ENCODE measurements at regions of chr3 and their contacts with region 1.

Region 1: DNA sequence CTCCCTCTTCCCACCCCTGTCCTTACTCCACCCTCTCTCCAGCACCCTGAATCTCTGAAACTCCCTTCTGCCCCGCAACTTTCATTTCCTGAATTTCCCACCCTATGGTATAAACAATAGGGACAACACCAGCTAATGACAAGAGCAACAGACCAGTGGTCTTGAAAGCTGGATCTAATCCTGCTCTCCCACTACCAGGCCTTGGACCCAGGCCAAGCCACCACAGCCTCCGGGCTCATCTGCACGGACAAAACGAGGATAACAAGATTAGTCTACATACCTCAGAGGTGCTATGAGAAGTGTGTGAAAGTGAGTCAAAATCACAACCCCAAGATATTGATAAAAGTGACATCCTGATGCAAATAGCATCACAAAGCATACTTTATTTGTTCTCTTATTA is 128.6 kb downstream of the ERC2 start:
- DNase-seq: no peak
- H3K4me3 ChIP-seq: no peak overlapping the region
- H3K27ac ChIP-seq: no peak overlapping the region
- H3K4me1 ChIP-seq: no peaks in the 10 kb centered on the region
- H3K27me3 ChIP-seq: no peaks in the 10 kb centered on the region
- CTCF ChIP-seq: no peak
- POLR2A ChIP-seq: no peak

Region 2: DNA sequence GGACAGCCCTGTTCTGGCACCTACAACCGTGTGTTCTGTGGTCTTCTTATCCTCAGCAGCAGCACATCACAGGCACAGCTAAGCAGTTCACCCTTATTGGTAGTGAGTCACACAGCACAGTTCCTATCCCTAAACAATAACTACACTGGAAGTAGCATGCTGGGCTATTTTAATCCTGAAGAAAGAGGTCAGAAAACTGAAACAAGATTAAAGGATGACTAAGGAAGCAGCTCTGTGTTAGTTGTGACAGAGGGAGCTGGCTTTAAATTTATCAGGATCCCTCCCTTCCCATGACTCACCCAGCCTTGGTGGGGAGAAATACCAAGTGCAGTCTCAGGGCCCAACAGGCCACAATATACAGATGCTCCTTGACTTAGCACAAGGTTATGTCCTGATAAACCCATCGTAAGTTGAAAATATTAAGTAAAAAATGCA is 15.7 kb before region 1 on chr3:
- CTCF ChIA-PET with region 1: interaction called, 13 read pairs
- POLR2A ChIA-PET with region 1: no interaction called
- dilution Hi-C with region 1: no loop called
- intact Hi-C with region 1: no loop called
- DNase-seq: peak; percentile 78
- H3K4me3 ChIP-seq: no peak overlapping the region
- H3K27ac ChIP-seq: peak overlapping the region; percentile 20
- H3K4me1 ChIP-seq: peaks cover 17% of the 10 kb centered on the region
- H3K27me3 ChIP-seq: no peaks in the 10 kb centered on the region
- CTCF ChIP-seq: no peak
- POLR2A ChIP-seq: no peak

Region 3: GRCh38 chr3:56443372-56443771 is 103.7 kb after region 1 on chr3:
- CTCF ChIA-PET with region 1: interaction called, 55 read pairs
- POLR2A ChIA-PET with region 1: no interaction called
- dilution Hi-C with region 1: no loop called
- intact Hi-C with region 1: loop called (anchors 1 kb)
- DNase-seq: no peak
- H3K4me3 ChIP-seq: no peak overlapping the region
- H3K27ac ChIP-seq: no peak overlapping the region
- H3K4me1 ChIP-seq: no peaks in the 10 kb centered on the region
- H3K27me3 ChIP-seq: no peaks in the 10 kb centered on the region
- CTCF ChIP-seq: no peak
- POLR2A ChIP-seq: no peak

Region 4: GRCh38 chr3:56453011-56453410 is 113.3 kb after region 1 on chr3:
- CTCF ChIA-PET with region 1: interaction called, 55 read pairs
- POLR2A ChIA-PET with region 1: no interaction called
- dilution Hi-C with region 1: no loop called
- intact Hi-C with region 1: no loop called
- DNase-seq: no peak
- H3K4me3 ChIP-seq: no peak overlapping the region
- H3K27ac ChIP-seq: no peak overlapping the region
- H3K4me1 ChIP-seq: no peaks in the 10 kb centered on the region
- H3K27me3 ChIP-seq: no peaks in the 10 kb centered on the region
- CTCF ChIP-seq: no peak
- POLR2A ChIP-seq: no peak

Measured in endothelial cell of umbilical vein (primary cell).